Activated CD4-positive, alpha-beta T cell treated with anti-CD3 and anti-CD28 coated beads for 36 hours (primary cell): ENCODE measurements at regions of chr5 and their contacts with region 1.

Region 1: DNA sequence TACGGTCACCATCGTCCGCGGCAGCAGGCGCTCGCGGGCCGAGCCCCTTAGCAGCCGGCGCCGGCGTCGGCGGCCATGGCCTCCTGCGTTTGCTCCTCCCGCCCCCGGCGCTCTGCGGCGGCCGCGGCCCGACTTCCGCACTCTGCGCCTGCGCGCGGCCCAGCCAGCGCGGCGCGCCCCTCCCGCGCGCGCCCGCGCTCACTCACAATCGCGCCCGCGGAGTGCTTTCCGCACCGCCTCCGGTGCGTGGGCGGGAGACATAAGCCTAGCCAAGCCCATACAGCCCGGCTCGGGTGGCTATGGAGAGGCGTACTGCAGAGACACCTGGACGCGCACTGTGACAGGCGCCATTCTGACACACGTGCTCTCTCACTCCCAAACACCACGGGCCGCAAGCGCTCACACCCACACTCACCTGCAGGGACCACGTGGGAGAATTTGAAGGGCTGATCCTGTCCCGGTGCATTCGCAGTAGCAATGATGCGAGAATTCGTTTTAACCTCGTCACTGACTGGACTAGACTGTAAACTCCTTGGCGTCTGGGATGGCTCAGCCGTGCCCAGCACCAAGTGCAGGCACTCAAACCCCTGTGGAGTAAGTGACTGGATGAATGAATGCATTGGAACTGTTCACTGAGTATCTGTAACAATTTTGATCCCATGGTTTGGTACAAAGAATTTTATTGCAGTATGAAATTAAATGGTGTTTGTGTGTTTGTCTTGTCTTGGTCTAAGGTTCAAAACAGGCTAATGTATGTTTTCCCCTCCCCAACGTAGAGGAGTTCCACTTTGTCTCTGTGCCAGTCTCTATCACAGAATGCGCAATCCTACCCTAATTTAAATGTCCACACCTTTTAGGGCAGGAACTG is at the start of gene RNF145:
- DNase-seq: peak; percentile 96
- ATAC-seq: peak; percentile 65
- H3K4me3 Mint-ChIP-seq: peak within 1 kb of the TSS; percentile 100
- H3K27ac Mint-ChIP-seq: peak within 1 kb of the TSS; percentile 100
- H3K4me1 Mint-ChIP-seq: peaks cover 38% of the 10 kb centered on the region
- H3K27me3 Mint-ChIP-seq: no peaks in the 10 kb centered on the region
- total RNA-seq, gene RNF145: 81.9 to 87.5 TPM

Region 2: DNA sequence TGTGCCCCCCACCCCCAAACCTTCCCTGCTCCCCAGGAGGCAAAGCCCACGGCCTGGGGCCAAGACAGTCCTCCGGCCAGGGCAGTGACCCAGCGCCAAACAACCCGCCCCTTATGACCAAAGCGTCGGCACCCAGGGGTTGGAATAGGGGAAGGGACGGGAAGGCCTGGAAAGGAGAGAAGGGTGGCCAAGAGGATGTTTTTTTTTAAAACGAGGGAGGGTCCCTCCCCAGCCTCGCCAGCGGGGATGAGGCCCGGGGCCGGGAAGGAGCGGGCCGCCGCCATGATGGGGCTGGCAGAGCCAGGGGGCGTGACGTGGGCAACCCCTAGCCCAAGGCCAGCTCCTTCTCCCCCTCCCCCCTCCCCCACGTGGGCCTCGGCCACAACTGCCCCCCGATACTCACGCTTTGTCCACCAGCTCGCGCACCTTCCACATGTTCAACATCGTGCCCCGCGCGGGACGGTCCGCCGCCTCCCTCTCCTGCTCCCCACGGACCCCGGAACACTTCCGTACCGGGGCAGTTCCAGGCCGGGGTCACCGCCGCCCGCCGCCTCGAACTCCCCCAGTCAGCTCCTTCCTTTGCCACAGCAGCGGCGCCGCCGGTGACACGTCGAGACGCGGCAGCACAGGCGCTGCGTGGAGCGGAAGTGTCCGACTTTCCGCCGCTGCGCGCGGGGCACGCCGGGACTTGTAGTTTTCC is 1351.0 kb before region 1 on chr5 and contains the start of gene CLINT1:
- CTCF ChIA-PET with region 1: no interaction called
- POLR2A ChIA-PET with region 1: no interaction called
- intact Hi-C with region 1: loop called in 1 of 2 experiments (anchors 2 kb)
- DNase-seq: peak; percentile 94
- ATAC-seq: peak; percentile 81
- H3K4me3 Mint-ChIP-seq: peak within 1 kb of the TSS; percentile 91
- H3K27ac Mint-ChIP-seq: peak within 1 kb of the TSS; percentile 96
- H3K4me1 Mint-ChIP-seq: peaks cover 76% of the 10 kb centered on the region
- H3K27me3 Mint-ChIP-seq: no peaks in the 10 kb centered on the region
- total RNA-seq, gene CLINT1: 59.0 to 69.0 TPM

Region 3: GRCh38 chr5:159163027-159163700 is 46.5 kb before region 1 on chr5:
- CTCF ChIA-PET with region 1: interaction called, 15 read pairs
- POLR2A ChIA-PET with region 1: interaction called, 3 read pairs
- intact Hi-C with region 1: loop called (anchors 1 kb)
- DNase-seq: peak; percentile 38
- ATAC-seq: peak; percentile 96
- H3K4me3 Mint-ChIP-seq: no peak overlapping the region
- H3K27ac Mint-ChIP-seq: peak overlapping the region; percentile 82
- H3K4me1 Mint-ChIP-seq: peaks cover 48% of the 10 kb centered on the region
- H3K27me3 Mint-ChIP-seq: no peaks in the 10 kb centered on the region

Region 4: DNA sequence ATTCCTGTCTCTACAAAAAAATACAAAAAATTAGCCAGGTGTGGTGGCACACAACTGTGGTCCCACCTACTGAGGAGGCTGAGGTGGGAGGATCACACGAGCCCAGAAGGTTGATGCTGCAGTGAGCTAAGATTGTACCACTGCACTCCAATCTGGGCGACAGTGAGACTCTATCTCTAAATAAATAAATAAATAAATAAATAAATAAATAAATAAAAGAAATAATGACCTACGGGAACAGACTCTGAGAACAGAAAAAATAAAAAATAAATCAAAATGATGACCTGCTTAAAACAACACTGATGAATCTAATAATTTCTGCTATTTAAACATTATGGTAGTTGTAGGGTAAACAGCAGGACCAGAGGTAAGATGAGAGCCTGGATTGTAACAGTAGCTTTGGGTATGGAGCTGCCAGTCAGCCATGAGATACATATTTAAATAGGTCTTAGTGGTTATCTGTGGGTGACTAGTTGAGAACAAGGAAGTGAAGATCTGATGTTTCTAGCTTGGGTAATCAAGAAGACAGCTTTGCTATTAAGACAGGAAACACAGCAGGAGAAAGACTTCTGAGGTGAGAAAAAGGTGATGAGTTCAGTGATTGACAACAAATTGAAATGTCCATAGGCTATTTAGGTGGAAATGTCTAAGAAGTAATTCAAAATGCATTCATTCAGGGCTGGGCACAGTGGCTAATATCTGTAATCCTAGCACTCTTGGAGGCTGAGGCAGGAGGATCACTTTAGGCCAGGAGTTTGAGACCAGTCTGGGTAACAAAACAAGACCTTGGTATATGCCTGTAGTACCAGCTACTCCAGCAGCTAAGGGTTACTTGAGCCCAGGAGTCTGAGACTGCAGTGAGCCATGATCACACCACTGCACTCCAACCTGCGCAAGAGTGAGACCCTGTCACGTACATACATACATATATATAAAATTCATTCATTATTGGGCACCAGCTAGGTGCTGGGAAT is 11.3 kb before region 1 on chr5:
- CTCF ChIA-PET with region 1: interaction called, 22 read pairs
- POLR2A ChIA-PET with region 1: interaction called, 16 read pairs
- intact Hi-C with region 1: no loop called
- DNase-seq: no peak
- ATAC-seq: peak; percentile 80
- H3K4me3 Mint-ChIP-seq: no peak overlapping the region
- H3K27ac Mint-ChIP-seq: peak overlapping the region; percentile 79
- H3K4me1 Mint-ChIP-seq: peaks cover 79% of the 10 kb centered on the region
- H3K27me3 Mint-ChIP-seq: no peaks in the 10 kb centered on the region

Region 5: GRCh38 chr5:159412284-159413046 is 202.8 kb after region 1 on chr5:
- CTCF ChIA-PET with region 1: no interaction called
- POLR2A ChIA-PET with region 1: no interaction called
- intact Hi-C with region 1: loop called in 1 of 2 experiments (anchors 2 kb)
- DNase-seq: peak; percentile 75
- ATAC-seq: peak; percentile 82
- H3K4me3 Mint-ChIP-seq: no peak overlapping the region
- H3K27ac Mint-ChIP-seq: no peak overlapping the region
- H3K4me1 Mint-ChIP-seq: peaks cover 47% of the 10 kb centered on the region
- H3K27me3 Mint-ChIP-seq: peaks cover 6% of the 10 kb centered on the region

Region 6: GRCh38 chr5:160119142-160119904 is 909.7 kb after region 1 on chr5 and contains the start of gene PWWP2A:
- CTCF ChIA-PET with region 1: no interaction called
- POLR2A ChIA-PET with region 1: no interaction called
- intact Hi-C with region 1: loop called (anchors 1 to 5 kb)
- DNase-seq: peak; percentile 98
- ATAC-seq: peak; percentile 96
- H3K4me3 Mint-ChIP-seq: peak within 1 kb of the TSS; percentile 90
- H3K27ac Mint-ChIP-seq: peak within 1 kb of the TSS; percentile 94
- H3K4me1 Mint-ChIP-seq: peaks cover 16% of the 10 kb centered on the region
- H3K27me3 Mint-ChIP-seq: peaks cover 3% of the 10 kb centered on the region
- total RNA-seq, gene PWWP2A: 14.7 to 24.3 TPM